ENCODE measurements at regions of chr6 and their contacts with region 1.

Region 1: GRCh38 chr6:47278550-47278949 is 31.2 kb downstream of the TNFRSF21 start:
- DNase-seq: no peak
- ATAC-seq: no peak
- H3K4me3 ChIP-seq: no peak overlapping the region
- H3K4me3 Mint-ChIP-seq: no peak overlapping the region
- H3K27ac ChIP-seq: no peak overlapping the region
- H3K27ac Mint-ChIP-seq: no peak overlapping the region
- H3K4me1 ChIP-seq: no peaks in the 10 kb centered on the region
- H3K4me1 Mint-ChIP-seq: no peaks in the 10 kb centered on the region
- H3K27me3 ChIP-seq: no peaks in the 10 kb centered on the region
- H3K27me3 Mint-ChIP-seq: no peaks in the 10 kb centered on the region

Region 2: GRCh38 chr6:45850378-45851033 is 1428.0 kb before region 1 on chr6:
- CTCF ChIA-PET with region 1: no interaction called
- POLR2A ChIA-PET with region 1: interaction called in 1 of 2 experiments, 10 read pairs
- DNase-seq: no peak
- ATAC-seq: no peak
- H3K4me3 ChIP-seq: no peak overlapping the region
- H3K4me3 Mint-ChIP-seq: no peak overlapping the region
- H3K27ac ChIP-seq: no peak overlapping the region
- H3K27ac Mint-ChIP-seq: no peak overlapping the region
- H3K4me1 ChIP-seq: no peaks in the 10 kb centered on the region
- H3K4me1 Mint-ChIP-seq: no peaks in the 10 kb centered on the region
- H3K27me3 ChIP-seq: no peaks in the 10 kb centered on the region
- H3K27me3 Mint-ChIP-seq: peaks cover 6 to 19% of the 10 kb centered on the region in 2 donors

Region 3: DNA sequence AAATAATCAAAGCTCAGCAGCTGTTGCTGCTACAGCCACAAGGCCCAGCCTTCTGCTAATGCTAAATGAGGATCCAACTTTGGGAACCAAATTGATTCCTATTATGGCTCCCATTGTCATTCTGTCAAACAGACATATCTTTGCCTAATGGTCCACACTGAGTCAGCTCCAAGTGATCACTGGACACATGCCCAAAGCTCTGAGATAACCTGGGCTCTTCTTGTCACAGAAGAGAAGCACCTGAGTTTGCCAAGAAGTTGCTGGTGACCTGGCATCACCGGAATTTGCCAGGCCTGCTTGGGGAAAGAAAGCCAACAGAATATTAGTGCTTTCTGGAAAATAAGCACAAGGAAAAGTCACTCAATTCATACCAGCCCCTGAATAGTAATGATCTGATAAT is 25.3 kb after region 1 on chr6:
- CTCF ChIA-PET with region 1: no interaction called
- POLR2A ChIA-PET with region 1: no interaction called
- DNase-seq: no peak
- ATAC-seq: no peak
- H3K4me3 ChIP-seq: no peak overlapping the region
- H3K4me3 Mint-ChIP-seq: no peak overlapping the region
- H3K27ac ChIP-seq: no peak overlapping the region
- H3K27ac Mint-ChIP-seq: no peak overlapping the region
- H3K4me1 ChIP-seq: peaks cover 0 to 5% of the 10 kb centered on the region in 2 experiments
- H3K4me1 Mint-ChIP-seq: peaks cover 6 to 7% (median 6%) of the 10 kb centered on the region in 3 donors
- H3K27me3 ChIP-seq: peaks cover 0 to 16% of the 10 kb centered on the region in 2 experiments
- H3K27me3 Mint-ChIP-seq: peaks cover 37 to 48% of the 10 kb centered on the region in 2 donors

Measured in T-cell (primary cell).